Left ventricle myocardium inferior (tissue), 1 donor: ENCODE measurements at regions of chr16 and their contacts with region 1.

Region 1: GRCh38 chr16:74713325-74713724 is 12.7 kb upstream of the MLKL start:
- DNase-seq: no peak
- H3K4me3 ChIP-seq: no peak overlapping the region
- H3K27ac ChIP-seq: no peak overlapping the region
- H3K4me1 ChIP-seq: no peaks in the 10 kb centered on the region
- H3K27me3 ChIP-seq: no peaks in the 10 kb centered on the region
- CTCF ChIP-seq: no peak

Region 2: GRCh38 chr16:74862741-74863244 is 149.5 kb after region 1 on chr16:
- intact Hi-C with region 1: loop called (anchors 5 kb)
- DNase-seq: no peak
- H3K4me3 ChIP-seq: no peak overlapping the region
- H3K27ac ChIP-seq: no peak overlapping the region
- H3K4me1 ChIP-seq: no peaks in the 10 kb centered on the region
- H3K27me3 ChIP-seq: no peaks in the 10 kb centered on the region
- CTCF ChIP-seq: peak; percentile 89